MCF 10A (cell line): ENCODE measurements at regions of chr13 and their contacts with region 1.

Region 1: GRCh38 chr13:44435142-44435982 is 61.7 kb downstream of the SERP2 start:
- DNase-seq: peak; percentile 99
- H3K4me3 Mint-ChIP-seq: peak overlapping the region; percentile 92
- H3K27ac Mint-ChIP-seq: peak overlapping the region; percentile 96
- H3K4me1 Mint-ChIP-seq: peaks cover 41% of the 10 kb centered on the region
- H3K27me3 Mint-ChIP-seq: no peaks in the 10 kb centered on the region
- CTCF ChIP-seq: no peak

Region 2: GRCh38 chr13:43346427-43346826 is 1088.9 kb before region 1 on chr13:
- CTCF ChIA-PET with region 1: no interaction called
- POLR2A ChIA-PET with region 1: no interaction called
- intact Hi-C with region 1: no loop called
- DNase-seq: no peak
- H3K4me3 Mint-ChIP-seq: no peak overlapping the region
- H3K27ac Mint-ChIP-seq: no peak overlapping the region
- H3K4me1 Mint-ChIP-seq: peaks cover 9% of the 10 kb centered on the region
- H3K27me3 Mint-ChIP-seq: no peaks in the 10 kb centered on the region
- CTCF ChIP-seq: no peak

Region 3: DNA sequence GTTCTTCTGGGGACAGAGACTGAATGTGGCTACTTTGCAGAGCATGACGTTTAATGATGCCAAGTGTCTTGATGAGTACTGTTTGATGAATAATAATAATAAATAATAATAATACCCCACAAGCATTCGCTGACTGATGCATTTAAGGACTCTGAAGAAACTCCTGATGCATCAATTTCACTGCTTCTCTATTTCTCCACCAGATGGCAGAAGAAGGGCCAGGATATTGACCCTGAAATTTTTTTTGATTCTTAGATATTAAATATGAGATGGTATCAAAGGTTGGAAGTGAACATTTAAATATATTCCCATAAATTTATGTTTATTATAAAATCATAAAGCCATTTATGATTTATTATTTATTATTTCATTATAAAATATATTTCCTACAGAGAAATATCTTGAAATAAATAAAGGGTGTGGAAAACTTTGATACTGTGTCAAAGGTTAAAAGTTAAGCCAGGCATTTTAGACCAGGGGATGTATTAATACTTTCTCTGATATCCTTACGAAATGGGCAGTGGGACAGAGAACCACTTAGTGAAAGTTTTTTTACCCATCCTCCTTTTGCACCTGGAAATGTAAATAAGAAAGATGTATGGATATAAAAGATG is 384.8 kb before region 1 on chr13:
- CTCF ChIA-PET with region 1: interaction called, 8 read pairs
- POLR2A ChIA-PET with region 1: interaction called, 14 read pairs
- intact Hi-C with region 1: loop called (anchors 1 kb)
- DNase-seq: peak; percentile 54
- H3K4me3 Mint-ChIP-seq: no peak overlapping the region
- H3K27ac Mint-ChIP-seq: no peak overlapping the region
- H3K4me1 Mint-ChIP-seq: peaks cover 5% of the 10 kb centered on the region
- H3K27me3 Mint-ChIP-seq: peaks cover 26% of the 10 kb centered on the region
- CTCF ChIP-seq: peak; percentile 62

Region 4: DNA sequence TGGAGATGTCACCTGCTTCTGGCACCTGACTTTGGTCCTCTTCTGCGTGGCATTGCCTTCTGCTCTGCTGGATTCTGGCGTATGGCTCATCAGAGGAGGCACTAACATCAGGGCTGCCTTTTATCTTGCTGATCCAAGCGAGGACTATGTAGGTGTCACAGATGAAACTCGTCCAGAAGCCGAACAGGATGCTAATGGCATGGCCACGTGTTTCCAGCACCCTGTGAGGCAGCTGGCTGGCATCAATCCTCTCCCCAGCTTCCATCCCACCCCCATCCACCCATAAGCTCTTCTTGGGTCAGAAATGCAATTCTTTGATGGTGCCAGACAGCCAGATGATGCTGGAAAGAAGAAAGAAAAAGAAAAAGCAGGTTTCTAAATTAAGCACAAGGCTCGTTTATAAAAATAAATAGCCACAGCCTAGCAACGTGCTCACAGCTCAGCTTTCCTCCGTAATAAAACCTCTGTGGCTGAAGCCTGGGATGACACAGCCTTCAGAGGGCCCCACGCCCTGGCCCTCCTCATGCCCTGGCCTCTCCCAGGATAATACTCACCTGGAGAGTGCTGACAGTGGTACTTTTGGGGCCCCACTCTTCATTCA is 274.7 kb before region 1 on chr13:
- CTCF ChIA-PET with region 1: no interaction called
- POLR2A ChIA-PET with region 1: interaction called, 80 read pairs
- intact Hi-C with region 1: loop called (anchors 1 kb)
- DNase-seq: no peak
- H3K4me3 Mint-ChIP-seq: no peak overlapping the region
- H3K27ac Mint-ChIP-seq: peak overlapping the region; percentile 98
- H3K4me1 Mint-ChIP-seq: peaks cover 21% of the 10 kb centered on the region
- H3K27me3 Mint-ChIP-seq: no peaks in the 10 kb centered on the region
- CTCF ChIP-seq: no peak

Region 5: GRCh38 chr13:44237276-44237767 is 198.0 kb before region 1 on chr13:
- CTCF ChIA-PET with region 1: interaction called, 25 read pairs
- POLR2A ChIA-PET with region 1: interaction called, 127 read pairs
- intact Hi-C with region 1: loop called (anchors 1 kb)
- DNase-seq: peak; percentile 95
- H3K4me3 Mint-ChIP-seq: no peak overlapping the region
- H3K27ac Mint-ChIP-seq: peak overlapping the region; percentile 37
- H3K4me1 Mint-ChIP-seq: peaks cover 25% of the 10 kb centered on the region
- H3K27me3 Mint-ChIP-seq: no peaks in the 10 kb centered on the region
- CTCF ChIP-seq: no peak

Region 6: DNA sequence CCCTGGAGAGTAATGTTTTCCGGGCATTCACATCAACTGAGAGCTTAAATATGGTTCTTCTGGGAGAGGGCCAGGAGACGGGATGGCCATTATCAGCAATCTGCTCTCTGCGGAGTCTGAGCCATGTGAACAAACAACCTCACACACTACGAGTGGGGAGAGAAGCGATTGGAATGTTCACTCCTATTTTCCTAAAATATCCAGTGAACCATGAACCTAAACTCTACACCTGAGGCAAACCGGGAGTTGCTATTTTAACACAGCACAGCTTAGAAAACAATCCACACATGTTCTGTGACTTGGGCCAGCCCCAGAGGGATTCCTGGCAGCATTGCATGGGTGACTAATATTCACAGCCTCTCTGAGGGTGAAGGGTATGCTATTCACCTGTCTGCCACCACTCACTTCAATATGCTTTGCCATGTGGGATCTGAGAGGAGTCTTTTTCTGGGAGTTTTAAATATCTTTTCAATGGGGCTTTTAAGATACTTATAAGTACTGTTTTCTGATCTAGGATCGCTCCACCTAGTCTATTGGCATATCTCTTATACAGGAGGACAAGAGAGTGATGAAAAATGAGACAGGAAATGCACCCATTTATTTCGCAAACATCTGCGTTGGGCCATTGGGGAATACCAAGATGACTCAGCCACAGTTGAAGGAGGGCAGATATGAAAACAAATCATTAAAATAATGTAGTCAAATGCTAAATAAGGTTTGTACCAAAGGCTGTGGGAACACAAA is 134.3 kb before region 1 on chr13:
- CTCF ChIA-PET with region 1: interaction called, 15 read pairs
- POLR2A ChIA-PET with region 1: interaction called, 341 read pairs
- intact Hi-C with region 1: no loop called
- DNase-seq: peak; percentile 98
- H3K4me3 Mint-ChIP-seq: peak overlapping the region; percentile 52
- H3K27ac Mint-ChIP-seq: peak overlapping the region; percentile 88
- H3K4me1 Mint-ChIP-seq: peaks cover 56% of the 10 kb centered on the region
- H3K27me3 Mint-ChIP-seq: no peaks in the 10 kb centered on the region
- CTCF ChIP-seq: peak; percentile 8

Region 7: GRCh38 chr13:44465318-44465717 is 30.0 kb after region 1 on chr13:
- CTCF ChIA-PET with region 1: interaction called, 11 read pairs
- POLR2A ChIA-PET with region 1: interaction called, 6 read pairs
- intact Hi-C with region 1: loop called (anchors 2 kb)
- DNase-seq: no peak
- H3K4me3 Mint-ChIP-seq: no peak overlapping the region
- H3K27ac Mint-ChIP-seq: no peak overlapping the region
- H3K4me1 Mint-ChIP-seq: peaks cover 6% of the 10 kb centered on the region
- H3K27me3 Mint-ChIP-seq: no peaks in the 10 kb centered on the region
- CTCF ChIP-seq: no peak

Region 8: GRCh38 chr13:44489740-44490139 is 54.4 kb after region 1 on chr13:
- CTCF ChIA-PET with region 1: no interaction called
- POLR2A ChIA-PET with region 1: no interaction called
- intact Hi-C with region 1: no loop called
- DNase-seq: no peak
- H3K4me3 Mint-ChIP-seq: no peak overlapping the region
- H3K27ac Mint-ChIP-seq: no peak overlapping the region
- H3K4me1 Mint-ChIP-seq: peaks cover 3% of the 10 kb centered on the region
- H3K27me3 Mint-ChIP-seq: no peaks in the 10 kb centered on the region
- CTCF ChIP-seq: no peak

Region 9: DNA sequence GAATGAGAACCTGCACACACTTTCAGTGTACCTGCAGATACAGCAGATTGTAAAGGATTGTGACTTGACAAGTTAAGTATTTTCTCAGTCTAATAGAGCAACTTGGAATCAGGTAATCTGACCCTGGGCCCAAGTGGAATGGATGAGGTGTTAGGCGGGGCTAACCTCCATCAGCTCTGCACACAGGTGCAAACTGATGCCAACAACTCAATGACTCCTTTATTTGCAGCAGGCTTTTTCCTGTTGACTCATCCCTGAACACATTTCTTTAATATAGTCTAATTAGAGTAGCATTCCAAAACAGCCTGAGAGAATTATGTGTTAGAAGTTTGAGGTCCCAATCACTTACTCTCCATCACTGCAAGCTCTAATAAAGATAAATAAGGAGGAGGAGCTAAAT is 856.8 kb after region 1 on chr13:
- CTCF ChIA-PET with region 1: no interaction called
- POLR2A ChIA-PET with region 1: no interaction called
- intact Hi-C with region 1: no loop called
- DNase-seq: peak; percentile 61
- H3K4me3 Mint-ChIP-seq: no peak overlapping the region
- H3K27ac Mint-ChIP-seq: no peak overlapping the region
- H3K4me1 Mint-ChIP-seq: peaks cover 13% of the 10 kb centered on the region
- H3K27me3 Mint-ChIP-seq: no peaks in the 10 kb centered on the region
- CTCF ChIP-seq: no peak